Panc1 (cell line): ENCODE measurements at regions of chr7 and their contacts with region 1.

Region 1: DNA sequence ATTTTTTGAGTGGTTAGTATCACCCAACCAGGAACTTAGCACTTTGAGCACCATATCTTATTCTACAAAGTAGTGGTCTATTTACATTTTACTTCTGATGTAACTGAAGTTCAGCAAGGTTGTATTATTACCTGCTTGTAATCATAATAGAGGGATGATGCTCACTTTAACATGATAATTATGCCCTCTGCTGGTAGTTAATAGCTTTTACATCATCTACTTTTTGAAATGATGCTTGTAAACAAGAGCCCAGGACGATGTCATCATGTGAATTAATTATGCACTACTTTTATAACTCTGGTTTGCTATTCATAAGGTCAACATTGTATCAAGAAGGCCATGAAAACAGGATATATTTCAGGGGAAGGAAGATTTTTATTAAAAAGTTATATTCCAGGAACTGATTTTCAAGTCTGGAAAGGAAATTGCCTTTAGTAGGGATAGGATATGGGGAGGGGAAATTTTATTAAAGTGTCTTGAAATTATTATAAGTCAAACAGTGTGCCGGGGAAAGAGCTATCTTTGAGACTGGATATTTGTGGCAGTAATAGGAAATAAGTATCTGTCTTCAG is 80.3 kb upstream of the SCIN start:
- DNase-seq: no peak
- ATAC-seq: peak; percentile 76; the same call in 1 of the 2 replicates
- H3K4me3 ChIP-seq: no peak overlapping the region
- H3K27ac ChIP-seq: no peak overlapping the region
- H3K4me1 ChIP-seq: no peaks in the 10 kb centered on the region
- H3K27me3 ChIP-seq: no peaks in the 10 kb centered on the region
- CTCF ChIP-seq: peak; percentile 65; the same call in 1 of the 2 replicates

Region 2: DNA sequence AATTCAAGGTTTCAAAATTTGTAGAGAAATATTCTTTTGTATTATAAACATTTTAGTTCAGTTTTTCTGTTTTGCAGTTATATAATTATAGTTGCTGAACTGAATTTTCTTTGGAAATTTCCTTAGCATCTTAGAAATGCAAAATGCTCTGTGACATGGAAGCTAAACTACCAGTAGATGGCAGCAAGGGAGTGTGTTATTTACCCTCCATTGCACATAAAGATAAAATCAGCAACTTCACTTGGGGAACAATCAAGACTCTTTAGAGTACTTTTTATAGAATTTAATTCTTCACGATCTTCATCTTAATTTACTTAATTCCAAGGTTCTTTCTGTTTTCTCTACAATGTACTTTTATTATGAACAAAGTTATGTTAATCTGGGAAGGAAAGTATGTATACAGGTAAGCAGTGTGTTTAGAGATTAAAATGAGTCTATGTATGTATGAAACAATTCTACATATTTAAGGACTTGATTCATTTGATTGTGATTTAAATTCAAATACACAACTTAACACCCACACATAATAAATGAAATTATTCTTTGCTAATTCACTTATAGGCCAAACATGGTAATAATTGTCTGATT is 1062.4 kb before region 1 on chr7:
- CTCF ChIA-PET with region 1: no interaction called
- POLR2A ChIA-PET with region 1: no interaction called
- in situ Hi-C with region 1: no loop called
- intact Hi-C with region 1: loop called (anchors 2 kb)
- DNase-seq: peak; percentile 59
- ATAC-seq: peak; percentile 92
- H3K4me3 ChIP-seq: no peak overlapping the region
- H3K27ac ChIP-seq: peak overlapping the region; percentile 44; the same call in 1 of the 2 replicates
- H3K4me1 ChIP-seq: peaks cover 11% of the 10 kb centered on the region; the same call in 1 of the 2 replicates
- H3K27me3 ChIP-seq: no peaks in the 10 kb centered on the region
- CTCF ChIP-seq: peak; percentile 82; the same call in 1 of the 2 replicates

Region 3: DNA sequence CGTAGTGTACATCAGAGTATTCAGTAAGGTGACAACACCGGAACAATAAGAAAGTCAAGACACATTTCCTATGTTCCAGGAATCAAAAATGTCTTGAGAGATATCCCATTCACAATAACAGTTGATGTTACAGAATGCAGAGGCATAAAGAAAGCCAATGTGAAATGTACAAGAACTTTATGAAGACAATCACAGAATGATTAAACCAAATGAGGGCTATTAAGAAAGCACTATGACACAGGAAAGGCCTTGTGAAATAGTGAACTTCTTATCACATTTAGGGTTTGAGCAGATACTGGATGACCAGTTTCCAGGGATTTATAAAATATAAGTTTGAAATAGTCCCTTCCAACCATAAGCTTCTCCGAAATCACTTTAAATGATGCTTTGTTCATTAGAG is 139.2 kb before region 1 on chr7:
- CTCF ChIA-PET with region 1: interaction called, 15 read pairs
- POLR2A ChIA-PET with region 1: no interaction called
- in situ Hi-C with region 1: no loop called
- intact Hi-C with region 1: no loop called
- DNase-seq: no peak
- ATAC-seq: no peak
- H3K4me3 ChIP-seq: no peak overlapping the region
- H3K27ac ChIP-seq: no peak overlapping the region
- H3K4me1 ChIP-seq: no peaks in the 10 kb centered on the region
- H3K27me3 ChIP-seq: no peaks in the 10 kb centered on the region
- CTCF ChIP-seq: no peak

Region 4: DNA sequence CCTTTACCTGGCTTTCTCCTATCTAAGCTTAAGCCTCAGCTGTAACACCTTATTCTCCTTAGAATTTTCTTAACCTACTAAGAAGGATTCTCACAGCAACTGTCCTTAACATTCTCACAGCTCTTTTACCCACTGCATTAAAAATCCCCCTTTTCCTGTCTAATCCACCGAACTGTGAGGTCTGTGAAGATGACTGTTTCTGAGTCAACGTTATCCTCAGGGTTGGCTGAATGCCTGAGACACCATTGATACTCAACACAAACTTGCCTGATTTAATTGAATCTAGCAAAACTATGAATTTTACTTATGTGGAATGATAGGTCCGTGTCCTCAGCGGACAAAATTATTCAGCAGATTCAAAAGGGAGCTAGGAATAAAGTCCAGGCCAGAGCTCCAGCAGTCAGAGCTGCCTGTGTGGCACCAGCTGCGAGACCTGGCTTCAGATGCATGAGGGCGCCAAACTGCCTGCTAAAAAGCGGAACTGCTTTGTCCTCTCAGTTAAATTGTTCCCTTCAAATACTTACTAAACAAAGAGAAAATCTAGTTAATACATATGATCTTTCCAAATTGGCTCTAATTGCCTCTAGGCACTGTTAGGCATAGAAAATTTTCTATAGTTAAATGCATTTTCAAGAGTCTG is 53.2 kb before region 1 on chr7:
- CTCF ChIA-PET with region 1: interaction called, 6 read pairs
- POLR2A ChIA-PET with region 1: no interaction called
- in situ Hi-C with region 1: no loop called
- intact Hi-C with region 1: loop called (anchors 10 kb)
- DNase-seq: no peak
- ATAC-seq: peak; percentile 81; the same call in 1 of the 2 replicates
- H3K4me3 ChIP-seq: no peak overlapping the region
- H3K27ac ChIP-seq: no peak overlapping the region
- H3K4me1 ChIP-seq: no peaks in the 10 kb centered on the region
- H3K27me3 ChIP-seq: peaks cover 5% of the 10 kb centered on the region; the same call in 1 of the 2 replicates
- CTCF ChIP-seq: peak; percentile 76

Region 5: DNA sequence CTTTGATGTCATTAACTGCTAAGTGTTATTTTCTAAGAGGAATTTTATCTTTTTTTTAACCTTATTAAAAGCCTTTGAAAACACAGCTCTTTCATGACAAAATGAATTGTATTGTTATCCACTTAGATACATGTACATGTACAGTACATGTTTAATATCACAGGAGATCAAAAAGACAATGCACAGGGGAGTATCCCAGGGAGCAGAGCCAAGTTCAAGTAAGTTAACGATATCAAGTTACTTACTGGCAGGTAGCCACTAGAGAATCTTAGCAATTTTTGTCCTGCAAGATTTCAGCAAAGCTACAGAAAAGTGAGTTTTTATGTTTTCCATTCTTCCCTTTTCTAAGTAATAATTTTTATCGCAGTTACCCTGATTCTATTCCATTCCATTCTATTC is 163.3 kb after region 1 on chr7:
- CTCF ChIA-PET with region 1: no interaction called
- POLR2A ChIA-PET with region 1: no interaction called
- in situ Hi-C with region 1: no loop called
- intact Hi-C with region 1: no loop called
- DNase-seq: no peak
- ATAC-seq: no peak
- H3K4me3 ChIP-seq: no peak overlapping the region
- H3K27ac ChIP-seq: no peak overlapping the region
- H3K4me1 ChIP-seq: no peaks in the 10 kb centered on the region
- H3K27me3 ChIP-seq: no peaks in the 10 kb centered on the region
- CTCF ChIP-seq: no peak